CD8-positive, alpha-beta T cell (primary cell): ENCODE measurements at regions of chr2 and their contacts with region 1.

Region 1: GRCh38 chr2:84925724-84926376 is 20.4 kb downstream of the TMSB10 start:
- DNase-seq: peak; percentile 96 to 100 (median 98)
- ATAC-seq: peak; percentile 80
- H3K4me3 ChIP-seq: peak overlapping the region; percentile 74 to 80
- H3K4me3 Mint-ChIP-seq: peak overlapping the region; percentile 94
- H3K27ac ChIP-seq: peak overlapping the region; percentile 49 to 54
- H3K27ac Mint-ChIP-seq: peak overlapping the region; percentile 92
- H3K4me1 ChIP-seq: peaks cover 26% of the 10 kb centered on the region
- H3K4me1 Mint-ChIP-seq: peaks cover 41% of the 10 kb centered on the region
- H3K27me3 ChIP-seq: no peaks in the 10 kb centered on the region
- H3K27me3 Mint-ChIP-seq: no peaks in the 10 kb centered on the region
- CTCF ChIP-seq: peak; percentile 99

Region 2: GRCh38 chr2:84495539-84496146 is 430.2 kb before region 1 on chr2:
- CTCF ChIA-PET with region 1: interaction called, 36 read pairs
- POLR2A ChIA-PET with region 1: interaction called, 3 read pairs
- intact Hi-C with region 1: loop called (anchors 1 kb)
- DNase-seq: peak in 6 of 9 experiments; percentile 22 to 87 (median 40)
- ATAC-seq: peak; percentile 99
- H3K4me3 ChIP-seq: no peak overlapping the region
- H3K4me3 Mint-ChIP-seq: no peak overlapping the region
- H3K27ac ChIP-seq: no peak overlapping the region
- H3K27ac Mint-ChIP-seq: peak overlapping the region; percentile 30
- H3K4me1 ChIP-seq: peaks cover 5% of the 10 kb centered on the region
- H3K4me1 Mint-ChIP-seq: peaks cover 18% of the 10 kb centered on the region
- H3K27me3 ChIP-seq: no peaks in the 10 kb centered on the region
- H3K27me3 Mint-ChIP-seq: no peaks in the 10 kb centered on the region
- CTCF ChIP-seq: peak; percentile 81

Region 3: GRCh38 chr2:84649487-84650142 is 276.2 kb before region 1 on chr2:
- CTCF ChIA-PET with region 1: interaction called, 10 read pairs
- POLR2A ChIA-PET with region 1: no interaction called
- intact Hi-C with region 1: no loop called
- DNase-seq: peak in 1 of 9 experiments; percentile 43
- ATAC-seq: peak; percentile 54
- H3K4me3 ChIP-seq: no peak overlapping the region
- H3K4me3 Mint-ChIP-seq: peak overlapping the region; percentile 40
- H3K27ac ChIP-seq: peak overlapping the region in 1 of 2 experiments; percentile 11
- H3K27ac Mint-ChIP-seq: peak overlapping the region; percentile 86
- H3K4me1 ChIP-seq: peaks cover 81% of the 10 kb centered on the region
- H3K4me1 Mint-ChIP-seq: peaks cover 79% of the 10 kb centered on the region
- H3K27me3 ChIP-seq: no peaks in the 10 kb centered on the region
- H3K27me3 Mint-ChIP-seq: no peaks in the 10 kb centered on the region
- CTCF ChIP-seq: no peak

Region 4: DNA sequence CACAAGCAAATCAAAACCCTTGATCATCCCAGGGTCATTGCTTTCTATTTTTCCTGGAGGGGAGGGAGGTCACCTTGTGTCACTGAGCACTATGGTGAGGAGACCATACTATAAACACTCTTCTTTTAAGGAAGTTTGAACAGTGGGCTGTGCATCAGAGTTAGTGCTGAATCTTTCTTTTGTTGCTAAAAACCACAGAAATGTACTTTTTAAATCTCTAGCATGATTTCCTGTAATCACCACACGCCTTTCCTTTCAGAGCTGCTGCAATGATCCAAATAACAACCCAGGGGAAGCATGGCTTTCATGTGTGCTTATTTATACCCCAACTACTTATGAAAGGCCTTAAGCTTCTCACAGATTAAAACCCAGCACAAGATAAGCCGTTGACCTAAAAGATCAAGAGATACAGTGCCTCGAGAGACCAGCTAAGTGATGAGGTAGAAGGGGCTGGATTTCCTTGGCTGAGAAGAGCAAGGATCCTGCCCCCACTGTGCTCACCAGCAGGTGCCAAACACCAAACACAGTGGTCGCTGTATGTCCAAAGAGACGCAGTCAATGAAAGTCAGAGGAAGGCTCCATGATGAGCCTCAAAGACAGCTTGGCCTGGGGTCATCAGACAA is 79.7 kb before region 1 on chr2:
- CTCF ChIA-PET with region 1: interaction called, 17 read pairs
- POLR2A ChIA-PET with region 1: interaction called, 6 read pairs
- intact Hi-C with region 1: no loop called
- DNase-seq: peak in 7 of 9 experiments; percentile 37 to 87 (median 65)
- ATAC-seq: peak; percentile 70
- H3K4me3 ChIP-seq: peak overlapping the region in 1 of 2 experiments; percentile 7
- H3K4me3 Mint-ChIP-seq: peak overlapping the region; percentile 65
- H3K27ac ChIP-seq: peak overlapping the region; percentile 68 to 88
- H3K27ac Mint-ChIP-seq: peak overlapping the region; percentile 94
- H3K4me1 ChIP-seq: peaks cover 97% of the 10 kb centered on the region
- H3K4me1 Mint-ChIP-seq: peaks cover 94% of the 10 kb centered on the region
- H3K27me3 ChIP-seq: no peaks in the 10 kb centered on the region
- H3K27me3 Mint-ChIP-seq: no peaks in the 10 kb centered on the region
- CTCF ChIP-seq: no peak

Region 5: DNA sequence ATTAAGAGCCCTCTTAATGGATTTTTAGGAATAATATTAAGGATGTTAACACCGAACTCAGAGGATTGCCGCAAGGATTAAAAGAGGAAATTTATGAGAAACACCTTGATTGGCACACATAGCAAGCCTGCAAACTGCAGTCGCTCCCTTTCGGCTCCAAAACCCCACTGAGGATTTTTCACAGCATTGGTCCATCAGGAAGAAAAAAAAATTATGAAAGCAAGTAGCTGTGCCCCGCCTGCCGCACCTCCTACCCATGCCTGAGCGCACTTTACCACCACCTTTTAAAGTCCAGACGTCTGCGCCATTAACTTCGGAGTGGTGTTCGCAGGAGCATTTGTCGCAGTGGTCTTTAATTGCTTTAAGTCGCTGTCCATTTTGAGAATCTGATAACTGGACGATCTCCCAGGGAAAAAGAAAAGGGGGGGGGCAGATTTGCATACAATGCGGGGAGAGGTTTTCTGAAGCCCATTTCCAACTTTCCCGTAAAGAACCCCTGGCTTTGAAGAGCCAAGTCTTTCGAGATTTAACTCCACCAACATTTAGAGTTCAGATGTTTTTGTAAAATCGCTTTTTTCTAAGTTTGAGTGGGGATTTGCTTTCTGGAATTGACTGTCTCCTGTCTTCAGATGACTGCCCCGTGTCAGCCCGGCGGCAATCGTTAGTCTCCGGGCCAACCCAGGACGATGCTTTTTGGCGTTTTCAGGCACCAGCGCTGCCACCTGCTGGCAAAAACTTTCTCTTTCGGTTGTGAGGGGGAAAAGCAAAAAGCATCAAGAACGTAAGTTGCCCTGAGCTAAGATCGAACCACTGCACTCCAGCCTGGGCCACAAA is 44.1 kb before region 1 on chr2:
- CTCF ChIA-PET with region 1: interaction called, 278 read pairs
- POLR2A ChIA-PET with region 1: interaction called, 43 read pairs
- intact Hi-C with region 1: loop called (anchors 1 to 2 kb)
- DNase-seq: peak; percentile 78 to 92 (median 86)
- ATAC-seq: peak; percentile 70
- H3K4me3 ChIP-seq: peak overlapping the region; percentile 80 to 90
- H3K4me3 Mint-ChIP-seq: peak overlapping the region; percentile 93
- H3K27ac ChIP-seq: peak overlapping the region; percentile 72 to 79
- H3K27ac Mint-ChIP-seq: peak overlapping the region; percentile 93
- H3K4me1 ChIP-seq: peaks cover 27% of the 10 kb centered on the region
- H3K4me1 Mint-ChIP-seq: peaks cover 68% of the 10 kb centered on the region
- H3K27me3 ChIP-seq: no peaks in the 10 kb centered on the region
- H3K27me3 Mint-ChIP-seq: no peaks in the 10 kb centered on the region
- CTCF ChIP-seq: peak; percentile 64

Region 6: GRCh38 chr2:84912984-84913383 is 12.9 kb before region 1 on chr2:
- CTCF ChIA-PET with region 1: interaction called, 98 read pairs
- POLR2A ChIA-PET with region 1: interaction called, 153 read pairs
- intact Hi-C with region 1: no loop called
- DNase-seq: no peak
- ATAC-seq: no peak
- H3K4me3 ChIP-seq: no peak overlapping the region
- H3K4me3 Mint-ChIP-seq: no peak overlapping the region
- H3K27ac ChIP-seq: no peak overlapping the region
- H3K27ac Mint-ChIP-seq: no peak overlapping the region
- H3K4me1 ChIP-seq: peaks cover 26% of the 10 kb centered on the region
- H3K4me1 Mint-ChIP-seq: peaks cover 37% of the 10 kb centered on the region
- H3K27me3 ChIP-seq: no peaks in the 10 kb centered on the region
- H3K27me3 Mint-ChIP-seq: no peaks in the 10 kb centered on the region
- CTCF ChIP-seq: no peak

Region 7: GRCh38 chr2:85001595-85001994 is 75.7 kb after region 1 on chr2:
- CTCF ChIA-PET with region 1: interaction called, 14 read pairs
- POLR2A ChIA-PET with region 1: no interaction called
- intact Hi-C with region 1: no loop called
- DNase-seq: no peak
- ATAC-seq: peak; percentile 34
- H3K4me3 ChIP-seq: no peak overlapping the region
- H3K4me3 Mint-ChIP-seq: no peak overlapping the region
- H3K27ac ChIP-seq: no peak overlapping the region
- H3K27ac Mint-ChIP-seq: peak overlapping the region; percentile 43
- H3K4me1 ChIP-seq: peaks cover 24% of the 10 kb centered on the region
- H3K4me1 Mint-ChIP-seq: peaks cover 57% of the 10 kb centered on the region
- H3K27me3 ChIP-seq: no peaks in the 10 kb centered on the region
- H3K27me3 Mint-ChIP-seq: no peaks in the 10 kb centered on the region
- CTCF ChIP-seq: no peak

Region 8: GRCh38 chr2:86123328-86123925 is 1197.6 kb after region 1 on chr2:
- CTCF ChIA-PET with region 1: no interaction called
- POLR2A ChIA-PET with region 1: no interaction called
- intact Hi-C with region 1: no loop called
- DNase-seq: no peak
- ATAC-seq: no peak
- H3K4me3 ChIP-seq: no peak overlapping the region
- H3K4me3 Mint-ChIP-seq: no peak overlapping the region
- H3K27ac ChIP-seq: no peak overlapping the region
- H3K27ac Mint-ChIP-seq: no peak overlapping the region
- H3K4me1 ChIP-seq: no peaks in the 10 kb centered on the region
- H3K4me1 Mint-ChIP-seq: no peaks in the 10 kb centered on the region
- H3K27me3 ChIP-seq: no peaks in the 10 kb centered on the region
- H3K27me3 Mint-ChIP-seq: no peaks in the 10 kb centered on the region
- CTCF ChIP-seq: no peak